ENCODE measurements at regions of chr3 and their contacts with region 1.

Region 1: DNA sequence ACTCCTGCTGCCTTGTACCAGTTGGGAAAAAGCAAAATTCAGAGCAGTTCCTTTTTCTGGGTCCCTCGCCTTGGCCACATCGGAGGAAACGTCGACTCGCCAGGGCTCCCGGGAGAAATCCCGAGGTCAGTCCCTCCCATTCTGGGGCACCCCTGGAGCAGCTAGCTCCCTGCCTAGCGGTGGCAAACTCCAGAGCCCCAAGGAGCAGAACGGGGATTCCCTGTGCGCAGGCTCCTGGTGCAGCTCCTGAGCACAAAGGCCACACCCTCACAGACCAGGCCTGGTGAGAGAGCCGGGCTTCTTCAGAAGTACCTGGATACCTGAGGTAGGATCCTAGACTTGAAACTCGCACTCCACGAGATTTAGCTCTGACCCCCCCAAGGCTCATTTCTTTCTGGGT is 2.6 kb downstream of the LRRC3B start:
- DNase-seq: no peak
- ATAC-seq: no peak
- H3K4me3 ChIP-seq: no peak overlapping the region
- H3K4me3 Mint-ChIP-seq: no peak overlapping the region
- H3K27ac ChIP-seq: no peak overlapping the region
- H3K27ac Mint-ChIP-seq: no peak overlapping the region
- H3K4me1 ChIP-seq: no peaks in the 10 kb centered on the region
- H3K4me1 Mint-ChIP-seq: no peaks in the 10 kb centered on the region
- H3K27me3 ChIP-seq: peaks cover 16 to 34% of the 10 kb centered on the region in 2 experiments
- H3K27me3 Mint-ChIP-seq: peaks cover 37 to 42% of the 10 kb centered on the region in 2 donors

Region 2: GRCh38 chr3:26556637-26557036 is 68.5 kb before region 1 on chr3:
- CTCF ChIA-PET with region 1: interaction called in 1 of 2 experiments, 14 read pairs
- POLR2A ChIA-PET with region 1: no interaction called
- DNase-seq: no peak
- ATAC-seq: no peak
- H3K4me3 ChIP-seq: no peak overlapping the region
- H3K4me3 Mint-ChIP-seq: no peak overlapping the region
- H3K27ac ChIP-seq: no peak overlapping the region
- H3K27ac Mint-ChIP-seq: no peak overlapping the region
- H3K4me1 ChIP-seq: no peaks in the 10 kb centered on the region
- H3K4me1 Mint-ChIP-seq: no peaks in the 10 kb centered on the region
- H3K27me3 ChIP-seq: no peaks in the 10 kb centered on the region
- H3K27me3 Mint-ChIP-seq: no peaks in the 10 kb centered on the region